Activated B cell treated with CpG ODN at 0.5 μM for 24 hours (primary cell): ENCODE measurements at regions of chr6 and their contacts with region 1.

Region 1: GRCh38 chr6:28136585-28137504 is 4.8 kb upstream of the ZKSCAN8 start:
- DNase-seq: peak; percentile 69
- ATAC-seq: peak; percentile 42
- H3K4me3 Mint-ChIP-seq: peak overlapping the region; percentile 98
- H3K27ac Mint-ChIP-seq: peak overlapping the region; percentile 100
- H3K4me1 Mint-ChIP-seq: peaks cover 76% of the 10 kb centered on the region
- H3K27me3 Mint-ChIP-seq: no peaks in the 10 kb centered on the region
- CTCF ChIP-seq: no peak

Region 2: GRCh38 chr6:27479319-27480182 is 657.3 kb before region 1 on chr6:
- CTCF ChIA-PET with region 1: no interaction called
- POLR2A ChIA-PET with region 1: interaction called, 3 read pairs
- intact Hi-C with region 1: loop called (anchors 1 kb)
- DNase-seq: peak; percentile 84
- ATAC-seq: peak; percentile 76
- H3K4me3 Mint-ChIP-seq: no peak overlapping the region
- H3K27ac Mint-ChIP-seq: no peak overlapping the region
- H3K4me1 Mint-ChIP-seq: peaks cover 9% of the 10 kb centered on the region
- H3K27me3 Mint-ChIP-seq: no peaks in the 10 kb centered on the region
- CTCF ChIP-seq: no peak

Region 3: DNA sequence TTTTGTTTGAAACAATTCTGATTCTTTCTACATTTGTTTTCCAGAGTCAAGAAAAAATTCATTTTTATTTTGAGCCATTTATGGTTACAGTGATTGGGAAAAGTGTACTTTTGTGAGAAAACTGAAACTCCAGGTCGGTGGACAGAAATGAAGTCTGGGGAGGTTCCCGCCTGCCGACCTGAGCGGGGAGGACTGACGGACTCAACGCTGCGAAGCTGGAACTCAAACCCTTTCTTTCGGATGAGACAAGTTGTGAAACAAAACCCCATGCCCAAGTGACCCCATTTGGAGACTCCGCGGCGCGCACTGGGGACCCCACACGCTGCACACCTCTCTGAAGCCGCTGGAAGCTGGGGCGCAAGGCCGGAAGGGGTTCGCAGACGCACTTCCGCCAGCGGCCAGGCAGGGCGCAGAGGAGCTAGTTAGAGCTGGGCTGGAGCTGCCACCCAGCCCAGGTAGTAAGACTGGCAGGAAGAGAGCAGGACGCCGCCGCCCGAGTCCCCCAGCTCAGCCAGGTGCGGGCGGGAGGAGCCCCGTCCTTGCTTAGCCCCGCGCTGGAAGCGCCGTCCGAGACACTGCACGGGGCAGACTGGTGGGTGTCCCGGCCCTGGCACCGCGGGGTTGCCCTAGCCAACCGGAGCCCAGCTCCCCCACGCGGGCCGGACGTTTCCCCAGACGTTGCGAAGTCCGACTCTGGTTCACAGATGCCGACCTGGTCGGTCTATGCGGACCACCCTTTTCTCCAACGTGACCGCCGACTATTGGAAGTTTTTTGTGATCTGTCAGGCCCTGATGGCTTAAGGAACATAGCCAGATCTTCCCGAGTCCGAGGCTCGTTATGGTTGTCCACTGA is 32.2 kb before region 1 on chr6:
- CTCF ChIA-PET with region 1: interaction called, 5 read pairs
- POLR2A ChIA-PET with region 1: interaction called, 41 read pairs
- intact Hi-C with region 1: loop called (anchors 1 kb)
- DNase-seq: peak; percentile 80
- ATAC-seq: peak; percentile 98
- H3K4me3 Mint-ChIP-seq: peak overlapping the region; percentile 94
- H3K27ac Mint-ChIP-seq: peak overlapping the region; percentile 95
- H3K4me1 Mint-ChIP-seq: peaks cover 10% of the 10 kb centered on the region
- H3K27me3 Mint-ChIP-seq: peaks cover 6% of the 10 kb centered on the region
- CTCF ChIP-seq: no peak

Region 4: DNA sequence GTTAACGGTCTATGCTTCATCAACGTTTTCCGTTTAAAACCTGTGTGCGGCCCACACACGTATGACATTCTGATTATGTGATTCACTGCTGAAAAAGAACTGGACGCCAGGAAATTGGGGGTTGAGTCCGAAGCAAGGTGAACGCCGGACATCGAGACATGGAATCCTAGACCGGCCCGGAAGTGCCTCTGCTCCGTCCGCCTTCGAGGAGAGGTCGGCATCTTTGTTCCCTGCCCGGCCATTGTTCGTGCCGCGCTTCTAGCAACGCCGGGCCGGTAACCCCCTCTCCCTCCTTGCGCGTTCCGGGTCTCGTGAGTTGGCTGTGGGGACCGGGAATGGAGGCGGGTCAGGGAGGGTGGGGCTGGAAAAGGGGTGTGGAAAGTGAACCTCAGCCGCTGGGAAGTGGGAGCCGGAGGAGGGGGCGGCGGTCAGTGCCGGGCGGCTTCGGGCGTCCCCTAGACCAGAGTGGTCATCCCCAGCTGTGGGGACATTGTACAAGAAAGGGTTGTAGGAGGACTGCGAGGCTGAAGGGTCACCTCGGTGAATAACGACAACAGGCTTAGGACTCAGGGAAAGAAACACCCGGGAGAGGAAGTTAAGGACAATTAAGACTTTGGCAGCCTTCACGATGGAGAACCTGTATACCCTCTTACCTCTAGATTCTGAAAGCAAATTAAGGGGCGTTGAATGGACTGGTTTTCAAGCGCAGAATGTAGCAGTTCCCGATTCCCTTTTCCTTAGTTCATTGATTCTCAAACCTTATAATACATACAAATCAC is 88.4 kb after region 1 on chr6 and contains the start of gene ZSCAN9:
- CTCF ChIA-PET with region 1: interaction called, 3 read pairs
- POLR2A ChIA-PET with region 1: interaction called, 11 read pairs
- intact Hi-C with region 1: loop called (anchors 2 kb)
- DNase-seq: peak; percentile 52
- ATAC-seq: peak; percentile 89
- H3K4me3 Mint-ChIP-seq: peak within 1 kb of the TSS; percentile 88
- H3K27ac Mint-ChIP-seq: peak within 1 kb of the TSS; percentile 68
- H3K4me1 Mint-ChIP-seq: peaks cover 21% of the 10 kb centered on the region
- H3K27me3 Mint-ChIP-seq: peaks cover 21% of the 10 kb centered on the region
- CTCF ChIP-seq: no peak
- total RNA-seq, gene ZSCAN9: 25.9 and 30.3 TPM in 2 replicates

Region 5: DNA sequence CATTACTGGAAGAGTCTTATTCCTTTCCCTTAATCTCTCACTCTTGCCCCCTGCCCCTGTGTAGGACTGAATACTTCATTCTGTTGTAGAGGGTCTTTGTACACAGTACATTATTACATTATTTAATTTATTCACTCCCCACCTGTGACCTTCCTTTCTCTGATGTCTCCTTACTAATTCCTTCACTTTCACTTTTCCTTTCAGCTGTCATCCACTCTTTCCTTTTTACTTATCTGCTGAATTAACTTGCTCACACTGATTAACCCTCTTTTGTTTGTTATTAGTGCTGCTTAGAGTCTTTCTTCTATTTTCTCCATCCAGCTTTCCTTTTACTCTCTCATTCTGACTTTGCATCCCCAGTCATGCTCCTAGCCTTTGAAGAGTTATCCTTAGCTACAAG is 138.0 kb after region 1 on chr6:
- CTCF ChIA-PET with region 1: no interaction called
- POLR2A ChIA-PET with region 1: no interaction called
- intact Hi-C with region 1: no loop called
- DNase-seq: no peak
- ATAC-seq: no peak
- H3K4me3 Mint-ChIP-seq: no peak overlapping the region
- H3K27ac Mint-ChIP-seq: no peak overlapping the region
- H3K4me1 Mint-ChIP-seq: no peaks in the 10 kb centered on the region
- H3K27me3 Mint-ChIP-seq: no peaks in the 10 kb centered on the region
- CTCF ChIP-seq: no peak

Region 6: DNA sequence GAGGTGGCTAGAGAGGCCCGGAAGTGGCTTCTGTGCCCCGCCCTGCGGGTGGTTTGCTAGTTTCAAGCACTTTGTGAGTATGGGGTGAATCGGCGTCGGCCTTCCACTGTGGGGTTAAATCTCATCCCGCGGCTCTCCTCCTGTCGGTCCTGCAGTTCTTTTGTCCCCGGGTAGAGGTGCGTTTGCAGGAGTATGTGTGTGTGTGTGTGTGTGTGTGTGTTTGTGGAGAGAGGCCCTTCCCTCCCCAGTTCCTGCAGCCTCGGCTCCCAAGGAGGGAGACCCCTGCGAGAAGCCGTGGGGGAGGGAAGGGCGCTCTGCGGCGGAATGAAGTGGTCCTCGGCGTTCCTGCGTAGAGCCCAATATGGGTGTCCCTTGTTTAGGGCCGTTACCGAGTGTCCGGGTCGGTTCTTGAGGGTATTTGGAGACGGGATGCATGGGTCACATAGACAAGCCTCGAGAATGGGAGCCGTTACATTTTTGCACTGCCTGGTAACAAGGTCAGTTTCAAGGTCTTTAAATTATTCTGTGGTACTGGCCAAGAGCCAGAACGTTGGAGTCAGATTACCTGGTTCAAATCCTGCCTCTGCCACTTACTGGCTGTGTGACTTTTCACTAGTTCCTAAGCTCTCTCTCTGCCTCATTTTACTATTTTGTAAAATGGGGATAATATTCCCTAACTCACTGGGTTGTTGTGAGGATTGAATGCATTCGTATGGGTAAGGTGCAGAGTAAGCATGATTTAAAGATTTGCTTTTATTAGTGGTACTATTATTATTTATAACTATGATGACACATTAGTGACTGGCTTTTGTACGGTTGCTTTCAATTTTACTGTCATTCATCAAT is 213.3 kb after region 1 on chr6 and contains the start of gene ZKSCAN3:
- CTCF ChIA-PET with region 1: interaction called, 23 read pairs
- POLR2A ChIA-PET with region 1: interaction called, 19 read pairs
- intact Hi-C with region 1: no loop called
- DNase-seq: peak; percentile 68
- ATAC-seq: peak; percentile 100
- H3K4me3 Mint-ChIP-seq: peak within 1 kb of the TSS; percentile 96
- H3K27ac Mint-ChIP-seq: peak within 1 kb of the TSS; percentile 94
- H3K4me1 Mint-ChIP-seq: peaks cover 28% of the 10 kb centered on the region
- H3K27me3 Mint-ChIP-seq: peaks cover 7% of the 10 kb centered on the region
- CTCF ChIP-seq: no peak
- total RNA-seq, gene ZKSCAN3: 5.6 and 6.3 TPM in 2 replicates

Region 7: GRCh38 chr6:28683944-28684538 is 547.2 kb after region 1 on chr6:
- CTCF ChIA-PET with region 1: no interaction called
- POLR2A ChIA-PET with region 1: no interaction called
- intact Hi-C with region 1: loop called (anchors 2 kb)
- DNase-seq: no peak
- ATAC-seq: no peak
- H3K4me3 Mint-ChIP-seq: no peak overlapping the region
- H3K27ac Mint-ChIP-seq: no peak overlapping the region
- H3K4me1 Mint-ChIP-seq: peaks cover 3% of the 10 kb centered on the region
- H3K27me3 Mint-ChIP-seq: peaks cover 66% of the 10 kb centered on the region
- CTCF ChIP-seq: no peak